Esophagus muscularis mucosa (tissue), 4 donors: ENCODE measurements at regions of chr18 and their contacts with region 1.

Region 1: GRCh38 chr18:70195852-70196434 is 9.5 kb downstream of the RTTN start:
- DNase-seq: no peak
- H3K4me3 ChIP-seq: no peak overlapping the region
- H3K27ac ChIP-seq: no peak overlapping the region
- H3K4me1 ChIP-seq: no peaks in the 10 kb centered on the region
- H3K27me3 ChIP-seq: no peaks in the 10 kb centered on the region
- CTCF ChIP-seq: peak; percentile 72 to 80 (median 77)
- EP300 ChIP-seq: no peak
- POLR2A ChIP-seq: no peak

Region 2: GRCh38 chr18:70431203-70431624 is 235.3 kb after region 1 on chr18:
- intact Hi-C with region 1: loop called (anchors 1 kb)
- DNase-seq: no peak
- H3K4me3 ChIP-seq: no peak overlapping the region
- H3K27ac ChIP-seq: no peak overlapping the region
- H3K4me1 ChIP-seq: no peaks in the 10 kb centered on the region
- H3K27me3 ChIP-seq: no peaks in the 10 kb centered on the region
- CTCF ChIP-seq: no peak
- EP300 ChIP-seq: no peak
- POLR2A ChIP-seq: no peak

Region 3: GRCh38 chr18:70454704-70455322 is 258.9 kb after region 1 on chr18:
- intact Hi-C with region 1: loop called (anchors 5 kb)
- DNase-seq: no peak
- H3K4me3 ChIP-seq: no peak overlapping the region
- H3K27ac ChIP-seq: no peak overlapping the region
- H3K4me1 ChIP-seq: no peaks in the 10 kb centered on the region
- H3K27me3 ChIP-seq: peaks cover 0 to 46% (median 0%) of the 10 kb centered on the region in 4 donors
- CTCF ChIP-seq: peak; percentile 62 to 76 (median 64)
- EP300 ChIP-seq: no peak
- POLR2A ChIP-seq: no peak